ENCODE measurements at regions of chr2 and their contacts with region 1.

Region 1: DNA sequence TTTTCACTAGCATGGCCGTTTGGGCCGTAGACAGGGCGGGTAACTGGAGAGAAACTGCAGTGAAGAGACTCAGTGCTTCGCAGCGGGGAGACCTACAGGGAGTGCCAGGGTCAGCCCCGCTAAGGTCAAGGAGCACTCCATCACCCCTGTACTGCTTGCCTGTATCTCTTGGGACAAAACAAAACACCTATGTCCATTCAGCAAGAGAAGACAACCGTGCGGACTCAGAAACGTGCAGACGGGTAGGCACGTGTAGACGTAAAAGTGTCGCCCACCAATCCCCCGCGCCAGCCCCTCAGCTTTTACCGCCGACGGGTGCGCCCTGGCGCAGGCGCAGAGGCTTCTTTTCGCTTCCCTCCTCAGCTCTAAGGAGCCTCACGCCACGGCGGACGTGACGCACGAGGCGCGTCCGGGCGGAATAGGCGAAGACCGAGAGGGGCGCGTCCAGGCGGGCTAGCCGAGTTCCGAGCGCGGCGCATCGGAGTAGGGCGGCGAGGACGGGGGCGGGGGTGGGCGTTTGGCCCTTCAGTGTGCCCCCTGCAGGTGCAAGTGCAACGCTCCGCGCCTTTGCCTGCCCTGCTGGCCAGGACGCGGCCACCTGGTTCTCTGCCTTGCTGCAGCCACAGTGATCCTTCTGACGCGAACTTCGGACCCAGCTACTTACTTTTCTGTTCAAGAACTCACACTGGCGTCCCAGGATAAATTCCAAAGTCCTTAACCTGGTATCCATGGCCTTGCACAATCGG is 3.3 kb upstream of the SOS1 start:
- DNase-seq: peak; percentile 98
- ATAC-seq: peak; percentile 68
- H3K4me3 Mint-ChIP-seq: peak overlapping the region; percentile 83
- H3K27ac Mint-ChIP-seq: peak overlapping the region; percentile 87
- H3K4me1 Mint-ChIP-seq: peaks cover 45% of the 10 kb centered on the region
- H3K27me3 Mint-ChIP-seq: no peaks in the 10 kb centered on the region

Region 2: GRCh38 chr2:38377050-38377828 is 746.9 kb before region 1 on chr2 and contains the start of gene ATL2:
- CTCF ChIA-PET with region 1: no interaction called
- POLR2A ChIA-PET with region 1: no interaction called
- intact Hi-C with region 1: loop called in 1 of 2 experiments (anchors 1 kb)
- DNase-seq: peak; percentile 97
- ATAC-seq: peak; percentile 79
- H3K4me3 Mint-ChIP-seq: peak within 1 kb of the TSS; percentile 90
- H3K27ac Mint-ChIP-seq: peak within 1 kb of the TSS; percentile 90
- H3K4me1 Mint-ChIP-seq: peaks cover 73% of the 10 kb centered on the region
- H3K27me3 Mint-ChIP-seq: no peaks in the 10 kb centered on the region
- total RNA-seq, gene ATL2: 29.9 to 50.3 TPM

Region 3: GRCh38 chr2:38665854-38666555 is 458.2 kb before region 1 on chr2 and contains the start of gene GALM:
- CTCF ChIA-PET with region 1: no interaction called
- POLR2A ChIA-PET with region 1: no interaction called
- intact Hi-C with region 1: loop called (anchors 2 to 10 kb)
- DNase-seq: peak; percentile 77
- ATAC-seq: peak; percentile 32
- H3K4me3 Mint-ChIP-seq: peak within 1 kb of the TSS; percentile 89
- H3K27ac Mint-ChIP-seq: peak within 1 kb of the TSS; percentile 99
- H3K4me1 Mint-ChIP-seq: peaks cover 67% of the 10 kb centered on the region
- H3K27me3 Mint-ChIP-seq: no peaks in the 10 kb centered on the region
- total RNA-seq, gene GALM: 56.0 to 57.8 TPM

Region 4: DNA sequence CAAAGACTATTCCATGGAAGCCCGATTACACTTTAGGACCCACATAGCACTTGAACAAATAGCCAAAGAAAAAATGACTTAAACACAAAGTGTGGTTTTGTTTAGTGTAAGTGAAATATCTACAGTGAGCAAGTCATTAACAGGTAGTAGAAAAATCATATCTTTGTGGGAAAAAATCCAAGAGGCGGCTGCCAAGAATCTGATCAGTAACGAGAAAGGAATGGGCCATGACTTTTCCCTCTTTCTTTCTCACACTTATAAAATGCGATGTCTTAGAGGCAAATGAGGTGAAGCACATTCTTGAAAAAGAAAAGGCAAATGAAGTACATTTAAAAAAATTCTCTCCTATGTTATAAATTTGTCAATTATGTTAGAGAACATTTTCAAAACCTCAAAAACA is 359.0 kb before region 1 on chr2:
- CTCF ChIA-PET with region 1: no interaction called
- POLR2A ChIA-PET with region 1: no interaction called
- intact Hi-C with region 1: no loop called
- DNase-seq: no peak
- ATAC-seq: no peak
- H3K4me3 Mint-ChIP-seq: no peak overlapping the region
- H3K27ac Mint-ChIP-seq: no peak overlapping the region
- H3K4me1 Mint-ChIP-seq: peaks cover 2% of the 10 kb centered on the region
- H3K27me3 Mint-ChIP-seq: no peaks in the 10 kb centered on the region

Region 5: GRCh38 chr2:38778687-38779082 is 345.5 kb before region 1 on chr2:
- CTCF ChIA-PET with region 1: no interaction called
- POLR2A ChIA-PET with region 1: no interaction called
- intact Hi-C with region 1: loop called in 1 of 2 experiments (anchors 2 kb)
- DNase-seq: no peak
- ATAC-seq: no peak
- H3K4me3 Mint-ChIP-seq: peak overlapping the region; percentile 97
- H3K27ac Mint-ChIP-seq: peak overlapping the region; percentile 95
- H3K4me1 Mint-ChIP-seq: peaks cover 7% of the 10 kb centered on the region
- H3K27me3 Mint-ChIP-seq: peaks cover 13% of the 10 kb centered on the region

Region 6: DNA sequence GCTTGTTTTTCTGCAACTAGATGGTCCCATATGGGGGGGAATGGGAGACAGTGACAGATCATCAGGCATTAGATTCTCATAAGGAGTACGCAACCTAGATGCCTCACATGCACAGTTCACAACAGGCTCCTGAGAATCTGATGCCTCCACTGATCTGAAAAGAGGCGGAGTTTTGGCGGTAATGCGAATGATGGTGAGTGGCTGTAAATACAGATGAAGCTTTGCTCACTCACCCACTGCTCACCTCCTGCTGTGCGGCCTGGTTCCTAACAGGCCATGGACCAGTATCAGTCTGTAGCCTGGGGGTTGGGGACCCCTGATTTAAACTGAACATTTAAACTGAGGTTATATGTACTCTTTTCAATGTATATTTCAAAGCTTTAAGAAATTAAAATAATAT is 44.0 kb before region 1 on chr2:
- CTCF ChIA-PET with region 1: no interaction called
- POLR2A ChIA-PET with region 1: no interaction called
- intact Hi-C with region 1: loop called in 1 of 2 experiments (anchors 5 kb)
- DNase-seq: no peak
- ATAC-seq: no peak
- H3K4me3 Mint-ChIP-seq: no peak overlapping the region
- H3K27ac Mint-ChIP-seq: no peak overlapping the region
- H3K4me1 Mint-ChIP-seq: peaks cover 21% of the 10 kb centered on the region
- H3K27me3 Mint-ChIP-seq: no peaks in the 10 kb centered on the region

Region 7: DNA sequence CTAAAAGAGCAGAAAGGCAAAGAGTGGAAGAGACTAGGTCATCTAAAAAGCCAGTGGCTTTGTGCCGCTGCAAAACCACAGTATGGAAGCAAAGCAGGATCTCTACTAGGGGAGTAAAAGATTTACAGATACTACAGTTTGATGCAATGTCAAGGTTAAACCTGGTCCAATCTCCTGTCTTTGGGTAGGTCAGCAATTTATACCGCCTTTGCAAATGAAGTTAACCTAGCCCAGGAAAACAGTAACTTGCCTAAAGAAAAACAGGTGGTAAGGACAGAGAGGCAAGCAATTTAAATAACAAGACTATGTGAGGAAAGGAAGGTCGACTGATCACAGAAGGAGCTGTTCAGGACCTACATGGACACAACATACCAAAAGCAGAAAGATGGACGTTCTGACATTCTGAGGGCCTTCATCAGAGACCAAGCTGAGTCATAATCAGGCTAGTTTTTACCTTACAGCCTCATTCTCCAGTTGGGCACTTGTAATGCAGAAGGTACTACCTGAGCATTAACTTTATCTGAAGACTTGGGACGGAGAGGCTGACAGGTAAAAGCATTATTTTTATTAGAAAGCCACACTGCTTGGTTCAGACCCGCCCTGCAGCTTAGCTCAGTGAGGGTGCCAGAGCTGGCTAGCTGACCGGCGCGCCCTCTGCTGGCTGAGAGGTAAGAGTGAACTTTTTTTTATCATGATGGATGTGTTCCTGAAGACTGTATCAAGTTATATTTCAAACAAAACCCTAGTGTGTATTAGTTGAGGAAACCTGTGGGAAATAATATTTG is 103.6 kb after region 1 on chr2:
- CTCF ChIA-PET with region 1: interaction called, 71 read pairs
- POLR2A ChIA-PET with region 1: no interaction called
- intact Hi-C with region 1: loop called (anchors 1 kb)
- DNase-seq: peak; percentile 91
- ATAC-seq: peak; percentile 83
- H3K4me3 Mint-ChIP-seq: peak overlapping the region; percentile 49
- H3K27ac Mint-ChIP-seq: peak overlapping the region; percentile 40
- H3K4me1 Mint-ChIP-seq: peaks cover 32% of the 10 kb centered on the region
- H3K27me3 Mint-ChIP-seq: peaks cover 6% of the 10 kb centered on the region

Region 8: GRCh38 chr2:39513641-39514094 is 389.5 kb after region 1 on chr2:
- CTCF ChIA-PET with region 1: no interaction called
- POLR2A ChIA-PET with region 1: interaction called, 7 read pairs
- intact Hi-C with region 1: loop called in 1 of 2 experiments (anchors 2 kb)
- DNase-seq: peak; percentile 84
- ATAC-seq: peak; percentile 83
- H3K4me3 Mint-ChIP-seq: peak overlapping the region; percentile 21
- H3K27ac Mint-ChIP-seq: peak overlapping the region; percentile 83
- H3K4me1 Mint-ChIP-seq: peaks cover 33% of the 10 kb centered on the region
- H3K27me3 Mint-ChIP-seq: peaks cover 3% of the 10 kb centered on the region

Region 9: GRCh38 chr2:39660612-39661236 is 536.6 kb after region 1 on chr2:
- CTCF ChIA-PET with region 1: no interaction called
- POLR2A ChIA-PET with region 1: no interaction called
- intact Hi-C with region 1: no loop called
- DNase-seq: no peak
- ATAC-seq: no peak
- H3K4me3 Mint-ChIP-seq: no peak overlapping the region
- H3K27ac Mint-ChIP-seq: no peak overlapping the region
- H3K4me1 Mint-ChIP-seq: peaks cover 2% of the 10 kb centered on the region
- H3K27me3 Mint-ChIP-seq: peaks cover 27% of the 10 kb centered on the region

Measured in activated CD4-positive, alpha-beta T cell treated with anti-CD3 and anti-CD28 coated beads for 36 hours (primary cell).